ENCODE measurements at regions of chr1 and their contacts with region 1.

Region 1: DNA sequence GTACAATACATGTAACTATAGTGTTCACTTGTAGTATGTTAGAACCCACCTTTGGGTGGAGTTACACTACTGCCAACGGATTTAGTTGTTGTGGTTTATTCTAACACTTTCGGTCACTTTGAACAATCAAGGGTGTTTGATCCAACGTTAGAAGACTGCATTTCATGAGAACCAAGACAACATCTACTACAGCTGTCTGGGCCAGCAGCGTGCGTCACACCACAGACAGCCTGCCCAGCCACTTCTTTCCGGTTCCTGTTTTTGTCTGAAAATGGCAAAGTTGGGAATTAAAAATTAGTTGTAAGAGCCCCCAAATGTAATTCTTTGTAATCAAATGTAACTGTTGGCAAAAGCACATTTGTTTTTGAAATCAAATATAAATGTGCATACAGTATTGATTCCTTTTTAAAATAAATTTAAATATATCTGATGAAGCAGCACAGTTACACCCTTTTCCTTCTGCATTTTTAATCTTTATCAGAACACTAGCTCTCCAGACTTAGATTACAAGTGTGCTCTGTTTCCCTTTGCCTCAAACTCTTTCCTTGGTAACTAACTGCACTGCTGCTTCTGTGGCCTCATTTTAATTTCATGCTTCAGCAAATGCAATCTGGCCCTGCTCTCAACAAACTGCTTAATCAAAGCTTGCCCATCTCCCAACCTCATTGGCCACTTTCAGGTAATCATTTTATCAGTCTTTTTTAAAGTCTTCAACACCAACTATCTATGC is 86.6 kb upstream of the DPH5 start:
- DNase-seq: peak; percentile 59 to 95 (median 72)
- ATAC-seq: peak; percentile 87
- H3K4me3 ChIP-seq: no peak overlapping the region
- H3K4me3 Mint-ChIP-seq: peak overlapping the region; percentile 73
- H3K27ac ChIP-seq: peak overlapping the region; percentile 58 to 81
- H3K27ac Mint-ChIP-seq: peak overlapping the region; percentile 94
- H3K4me1 ChIP-seq: peaks cover 23% of the 10 kb centered on the region
- H3K4me1 Mint-ChIP-seq: peaks cover 61% of the 10 kb centered on the region
- H3K27me3 ChIP-seq: no peaks in the 10 kb centered on the region
- H3K27me3 Mint-ChIP-seq: no peaks in the 10 kb centered on the region
- CTCF ChIP-seq: no peak

Region 2: DNA sequence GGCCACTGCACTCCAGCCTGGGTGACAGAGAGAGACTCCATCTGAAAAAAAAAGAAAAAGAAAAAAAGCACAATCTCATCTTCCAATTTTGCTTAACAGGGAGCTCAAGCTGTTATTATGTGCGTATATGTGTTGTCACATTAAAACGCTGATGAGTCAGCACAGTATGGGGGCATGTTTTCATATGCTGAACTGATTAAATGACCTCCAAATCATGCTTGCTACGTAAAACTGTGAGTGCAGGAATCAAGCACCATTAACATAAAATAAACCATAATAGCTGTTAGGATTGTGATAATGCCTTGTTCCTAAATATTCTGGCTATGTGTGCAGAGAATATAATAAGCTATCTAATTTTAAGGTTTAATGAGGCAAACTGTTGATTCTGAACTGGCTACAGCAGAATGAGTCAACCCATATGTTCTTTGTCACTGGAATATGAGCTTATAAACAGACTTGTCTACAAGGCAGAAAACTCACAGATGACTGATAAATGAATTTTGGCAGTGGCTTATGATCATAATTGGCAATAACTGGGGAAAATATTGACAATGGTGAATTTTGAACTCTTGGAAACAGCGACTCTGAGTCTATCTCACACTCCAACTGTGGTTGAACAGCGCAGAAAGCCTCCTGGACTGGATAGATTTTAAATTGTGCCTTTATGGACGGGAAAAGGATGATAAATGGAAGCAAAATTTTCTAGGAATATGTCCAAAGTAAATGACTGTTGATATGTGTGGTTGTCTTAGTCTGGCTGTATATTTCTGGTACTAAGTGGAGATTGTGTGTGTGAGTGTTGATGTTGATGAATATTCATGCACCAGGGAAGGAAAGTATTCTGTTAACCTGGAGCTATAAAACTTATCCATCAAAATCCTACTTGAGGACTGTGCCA is 317.2 kb before region 1 on chr1:
- CTCF ChIA-PET with region 1: no interaction called
- POLR2A ChIA-PET with region 1: no interaction called
- intact Hi-C with region 1: no loop called
- DNase-seq: no peak
- ATAC-seq: no peak
- H3K4me3 ChIP-seq: no peak overlapping the region
- H3K4me3 Mint-ChIP-seq: no peak overlapping the region
- H3K27ac ChIP-seq: no peak overlapping the region
- H3K27ac Mint-ChIP-seq: no peak overlapping the region
- H3K4me1 ChIP-seq: no peaks in the 10 kb centered on the region
- H3K4me1 Mint-ChIP-seq: no peaks in the 10 kb centered on the region
- H3K27me3 ChIP-seq: peaks cover 0 to 5% of the 10 kb centered on the region in 2 experiments
- H3K27me3 Mint-ChIP-seq: peaks cover 39% of the 10 kb centered on the region
- CTCF ChIP-seq: no peak

Region 3: DNA sequence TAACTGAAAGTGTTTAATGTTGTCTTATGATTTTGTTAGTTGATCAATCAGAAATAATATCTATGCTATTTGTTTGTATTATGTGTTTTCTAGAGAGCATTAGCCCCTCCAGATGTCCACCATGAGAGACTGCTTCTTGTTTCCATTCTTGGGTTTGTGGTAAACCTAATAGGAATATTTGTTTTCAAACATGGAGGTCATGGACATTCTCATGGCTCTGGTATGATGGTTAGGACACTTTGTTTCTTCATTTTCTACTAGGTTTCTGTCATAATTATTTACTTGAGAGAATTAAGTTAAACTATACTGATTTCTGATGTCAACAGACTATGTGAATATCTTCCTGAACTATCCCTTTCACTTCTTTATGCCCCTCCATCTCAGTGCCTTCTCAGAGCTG is 200.2 kb before region 1 on chr1:
- CTCF ChIA-PET with region 1: no interaction called
- POLR2A ChIA-PET with region 1: no interaction called
- intact Hi-C with region 1: no loop called
- DNase-seq: no peak
- ATAC-seq: no peak
- H3K4me3 ChIP-seq: no peak overlapping the region
- H3K4me3 Mint-ChIP-seq: no peak overlapping the region
- H3K27ac ChIP-seq: no peak overlapping the region
- H3K27ac Mint-ChIP-seq: peak overlapping the region; percentile 50
- H3K4me1 ChIP-seq: no peaks in the 10 kb centered on the region
- H3K4me1 Mint-ChIP-seq: peaks cover 38% of the 10 kb centered on the region
- H3K27me3 ChIP-seq: no peaks in the 10 kb centered on the region
- H3K27me3 Mint-ChIP-seq: no peaks in the 10 kb centered on the region
- CTCF ChIP-seq: no peak

Region 4: GRCh38 chr1:101025657-101026504 is 86.3 kb before region 1 on chr1 and contains the start of gene DPH5:
- CTCF ChIA-PET with region 1: no interaction called
- POLR2A ChIA-PET with region 1: no interaction called
- intact Hi-C with region 1: loop called in 1 of 2 experiments (anchors 1 kb)
- DNase-seq: peak; percentile 77 to 91 (median 84)
- ATAC-seq: peak; percentile 94
- H3K4me3 ChIP-seq: peak within 1 kb of the TSS; percentile 77
- H3K4me3 Mint-ChIP-seq: peak within 1 kb of the TSS; percentile 97
- H3K27ac ChIP-seq: peak within 1 kb of the TSS; percentile 63 to 75
- H3K27ac Mint-ChIP-seq: peak within 1 kb of the TSS; percentile 98
- H3K4me1 ChIP-seq: peaks cover 19% of the 10 kb centered on the region
- H3K4me1 Mint-ChIP-seq: peaks cover 91% of the 10 kb centered on the region
- H3K27me3 ChIP-seq: no peaks in the 10 kb centered on the region
- H3K27me3 Mint-ChIP-seq: no peaks in the 10 kb centered on the region
- CTCF ChIP-seq: no peak
- total RNA-seq, gene DPH5: 31.3 to 35.4 TPM

Region 5: DNA sequence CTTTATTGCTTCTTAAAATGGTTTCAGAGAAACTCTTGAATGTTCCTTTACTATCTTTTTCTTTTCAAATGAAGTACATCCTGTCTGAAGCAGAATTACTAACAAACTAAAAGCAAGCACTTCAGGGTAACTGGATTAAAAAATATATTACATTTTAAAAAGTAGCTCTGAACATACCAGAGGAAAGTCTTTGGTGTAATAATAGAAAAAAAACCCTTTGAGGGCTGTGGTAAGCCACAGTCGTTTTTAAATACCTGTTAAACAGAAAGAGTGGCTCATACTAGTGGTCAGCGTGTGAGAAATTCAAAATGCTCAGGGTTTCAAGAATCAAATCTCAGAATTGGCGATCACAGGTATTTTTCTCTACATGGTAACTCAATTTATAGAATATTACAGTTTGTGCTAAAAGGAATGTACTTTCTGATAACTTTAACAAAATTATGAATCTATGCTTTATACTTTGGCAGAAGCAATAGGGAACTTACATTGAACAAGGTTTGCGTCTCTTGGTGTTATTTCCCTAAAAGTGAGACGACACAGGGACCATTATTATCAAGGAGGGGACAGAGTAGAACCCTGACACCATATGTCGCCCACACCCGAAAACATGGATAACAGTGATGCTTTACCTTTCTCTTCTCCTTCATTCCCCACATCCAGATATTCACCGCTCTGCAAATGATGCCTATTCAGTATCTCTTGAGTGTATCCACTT is 10.4 kb after region 1 on chr1:
- CTCF ChIA-PET with region 1: interaction called, 6 read pairs
- POLR2A ChIA-PET with region 1: interaction called, 17 read pairs
- intact Hi-C with region 1: loop called in 1 of 2 experiments (anchors 1 kb)
- DNase-seq: peak in 3 of 14 experiments; percentile 60 to 67 (median 60)
- ATAC-seq: peak; percentile 54
- H3K4me3 ChIP-seq: no peak overlapping the region
- H3K4me3 Mint-ChIP-seq: peak overlapping the region; percentile 54
- H3K27ac ChIP-seq: peak overlapping the region in 1 of 2 donors; percentile 18
- H3K27ac Mint-ChIP-seq: peak overlapping the region; percentile 85
- H3K4me1 ChIP-seq: peaks cover 20% of the 10 kb centered on the region
- H3K4me1 Mint-ChIP-seq: peaks cover 66% of the 10 kb centered on the region
- H3K27me3 ChIP-seq: no peaks in the 10 kb centered on the region
- H3K27me3 Mint-ChIP-seq: no peaks in the 10 kb centered on the region
- CTCF ChIP-seq: no peak

Region 6: GRCh38 chr1:101136739-101137138 is 24.5 kb after region 1 on chr1:
- CTCF ChIA-PET with region 1: interaction called, 17 read pairs
- POLR2A ChIA-PET with region 1: interaction called, 4 read pairs
- intact Hi-C with region 1: no loop called
- DNase-seq: peak in 4 of 14 experiments; percentile 53 to 75 (median 64)
- ATAC-seq: peak; percentile 81
- H3K4me3 ChIP-seq: no peak overlapping the region
- H3K4me3 Mint-ChIP-seq: peak overlapping the region; percentile 40
- H3K27ac ChIP-seq: no peak overlapping the region
- H3K27ac Mint-ChIP-seq: peak overlapping the region; percentile 72
- H3K4me1 ChIP-seq: peaks cover 12% of the 10 kb centered on the region
- H3K4me1 Mint-ChIP-seq: peaks cover 65% of the 10 kb centered on the region
- H3K27me3 ChIP-seq: no peaks in the 10 kb centered on the region
- H3K27me3 Mint-ChIP-seq: no peaks in the 10 kb centered on the region
- CTCF ChIP-seq: peak; percentile 52

Region 7: GRCh38 chr1:101161619-101162018 is 49.4 kb after region 1 on chr1:
- CTCF ChIA-PET with region 1: no interaction called
- POLR2A ChIA-PET with region 1: no interaction called
- intact Hi-C with region 1: no loop called
- DNase-seq: no peak
- ATAC-seq: no peak
- H3K4me3 ChIP-seq: no peak overlapping the region
- H3K4me3 Mint-ChIP-seq: no peak overlapping the region
- H3K27ac ChIP-seq: no peak overlapping the region
- H3K27ac Mint-ChIP-seq: no peak overlapping the region
- H3K4me1 ChIP-seq: no peaks in the 10 kb centered on the region
- H3K4me1 Mint-ChIP-seq: no peaks in the 10 kb centered on the region
- H3K27me3 ChIP-seq: no peaks in the 10 kb centered on the region
- H3K27me3 Mint-ChIP-seq: no peaks in the 10 kb centered on the region
- CTCF ChIP-seq: no peak

Region 8: DNA sequence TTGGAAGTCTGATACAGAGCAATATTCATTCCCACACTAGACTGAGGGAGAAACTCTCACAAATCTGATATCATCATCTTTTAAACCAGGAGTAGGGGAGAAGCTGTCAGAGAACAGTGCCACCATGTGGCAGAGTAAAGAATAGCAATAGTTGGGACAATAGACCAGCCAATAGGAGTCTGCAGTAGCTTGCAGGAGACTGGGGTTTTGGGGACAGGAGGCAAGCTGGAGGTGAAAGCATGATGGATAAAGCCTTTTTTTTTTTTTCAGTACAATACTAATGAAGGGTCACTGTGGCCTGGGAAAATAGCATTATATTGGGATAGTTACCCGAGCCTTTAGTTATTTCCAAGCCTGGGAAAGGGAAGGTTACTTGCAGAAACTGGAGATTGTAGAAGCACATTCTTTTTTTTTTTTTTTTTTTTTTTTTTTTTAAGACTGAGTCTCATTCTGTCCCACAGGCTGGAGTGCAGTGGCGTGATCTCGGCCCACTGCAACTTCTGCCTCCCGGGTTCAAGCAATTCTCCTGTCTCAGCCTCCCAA is 245.3 kb after region 1 on chr1:
- CTCF ChIA-PET with region 1: interaction called, 6 read pairs
- POLR2A ChIA-PET with region 1: no interaction called
- intact Hi-C with region 1: loop called in 1 of 2 experiments (anchors 5 kb)
- DNase-seq: peak; percentile 43 to 92 (median 60)
- ATAC-seq: peak; percentile 100
- H3K4me3 ChIP-seq: no peak overlapping the region
- H3K4me3 Mint-ChIP-seq: no peak overlapping the region
- H3K27ac ChIP-seq: no peak overlapping the region
- H3K27ac Mint-ChIP-seq: peak overlapping the region; percentile 5
- H3K4me1 ChIP-seq: peaks cover 7% of the 10 kb centered on the region
- H3K4me1 Mint-ChIP-seq: peaks cover 9% of the 10 kb centered on the region
- H3K27me3 ChIP-seq: no peaks in the 10 kb centered on the region
- H3K27me3 Mint-ChIP-seq: no peaks in the 10 kb centered on the region
- CTCF ChIP-seq: peak; percentile 84

Measured in CD4-positive, alpha-beta T cell (primary cell).